ENCODE measurements at regions of chr4 and their contacts with region 1.

Region 1: GRCh38 chr4:109977854-109978501 is 65.3 kb downstream of the EGF start:
- DNase-seq: no peak
- ATAC-seq: peak; percentile 49 to 62 (median 58)
- H3K4me3 ChIP-seq: no peak overlapping the region
- H3K27ac ChIP-seq: no peak overlapping the region
- H3K4me1 ChIP-seq: no peaks in the 10 kb centered on the region
- H3K27me3 ChIP-seq: no peaks in the 10 kb centered on the region
- CTCF ChIP-seq: peak; percentile 68

Region 2: DNA sequence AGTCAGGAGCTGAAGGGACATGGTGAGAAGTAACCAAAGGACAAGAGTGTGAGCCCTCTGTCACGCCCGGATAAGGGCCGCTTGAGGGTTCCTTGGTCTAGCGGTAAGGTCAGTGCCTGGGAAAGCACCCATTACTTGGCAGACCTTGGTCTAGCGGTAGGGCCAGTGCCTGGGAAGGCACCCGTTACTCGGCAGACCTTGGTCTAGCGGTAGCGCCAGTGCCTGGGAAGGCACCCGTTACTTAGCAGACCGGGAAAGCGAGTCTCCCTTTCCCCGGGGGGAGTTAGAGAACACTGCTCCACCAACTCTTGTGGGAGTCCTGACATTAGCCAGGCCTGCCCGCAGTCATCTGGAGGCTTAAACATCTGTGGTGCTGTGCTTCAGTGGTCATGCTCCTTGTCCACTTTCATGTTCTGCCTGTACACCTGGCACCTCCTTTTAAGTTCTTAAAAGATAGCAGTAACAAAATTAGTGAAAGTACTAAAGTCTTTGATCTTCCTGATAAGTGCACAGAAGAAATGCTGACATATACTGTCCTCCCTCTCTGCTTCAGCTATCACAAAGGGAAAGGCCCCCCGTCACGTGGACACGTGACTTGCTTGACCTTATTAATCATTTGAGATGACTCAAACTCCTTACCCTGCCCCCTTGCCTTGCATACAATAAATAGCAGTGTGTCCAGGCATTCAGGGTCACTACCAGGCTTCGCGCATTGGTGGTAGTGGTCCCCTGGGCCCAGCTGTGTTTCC is 553.7 kb before region 1 on chr4:
- intact Hi-C with region 1: loop called (anchors 5 to 10 kb)
- DNase-seq: no peak
- ATAC-seq: no peak
- H3K4me3 ChIP-seq: no peak overlapping the region
- H3K27ac ChIP-seq: no peak overlapping the region
- H3K4me1 ChIP-seq: no peaks in the 10 kb centered on the region
- H3K27me3 ChIP-seq: peaks cover 0 to 2% (median 0%) of the 10 kb centered on the region in 3 donors
- CTCF ChIP-seq: no peak

Region 3: GRCh38 chr4:109532182-109532581 is 445.8 kb before region 1 on chr4:
- intact Hi-C with region 1: loop called in 1 of 2 experiments (anchors 10 kb)
- DNase-seq: no peak
- ATAC-seq: no peak
- H3K4me3 ChIP-seq: no peak overlapping the region
- H3K27ac ChIP-seq: no peak overlapping the region
- H3K4me1 ChIP-seq: no peaks in the 10 kb centered on the region
- H3K27me3 ChIP-seq: no peaks in the 10 kb centered on the region
- CTCF ChIP-seq: no peak

Region 4: DNA sequence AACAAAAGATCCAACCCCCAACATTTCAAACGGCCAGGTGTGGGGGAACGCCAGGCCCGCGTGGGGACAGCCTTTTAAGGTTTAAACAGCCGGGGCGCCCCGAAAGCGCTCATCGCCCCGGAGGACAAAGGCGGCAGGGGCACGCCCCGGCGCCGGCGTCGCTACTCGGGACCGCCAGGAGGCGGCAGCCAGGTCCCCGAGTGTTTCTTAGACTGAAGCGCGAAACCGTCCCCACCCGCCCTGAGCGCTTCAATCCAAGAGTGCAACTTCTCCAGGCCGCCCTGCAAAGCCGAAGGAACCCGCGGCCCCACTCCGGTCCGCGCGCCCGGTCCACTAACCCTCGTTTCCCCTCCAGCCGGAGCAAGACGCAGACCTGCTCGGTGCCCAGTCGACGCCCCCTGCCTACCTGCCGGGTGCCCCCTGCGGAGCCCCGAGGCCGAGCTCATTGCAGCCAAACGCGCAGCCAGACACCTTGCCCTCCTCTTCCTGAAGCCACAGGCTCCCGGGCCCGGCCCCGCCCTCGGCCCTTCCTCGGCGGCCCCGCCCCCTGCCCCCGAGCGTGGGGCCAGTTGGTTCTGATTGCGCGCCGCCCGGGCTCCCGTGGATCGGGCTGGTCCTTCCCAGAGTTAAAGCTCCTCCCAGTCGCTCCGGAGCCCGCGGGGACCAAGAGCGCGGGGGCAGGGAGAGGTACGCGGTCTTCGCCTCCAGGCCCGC is 274.9 kb before region 1 on chr4 and contains the start of gene CASP6:
- intact Hi-C with region 1: loop called (anchors 5 to 10 kb)
- DNase-seq: peak; percentile 87 to 89
- ATAC-seq: peak; percentile 87 to 96 (median 92)
- H3K4me3 ChIP-seq: peak within 1 kb of the TSS; percentile 77
- H3K27ac ChIP-seq: peak within 1 kb of the TSS; percentile 70
- H3K4me1 ChIP-seq: peaks cover 9% of the 10 kb centered on the region
- H3K27me3 ChIP-seq: no peaks in the 10 kb centered on the region
- CTCF ChIP-seq: peak; percentile 71
- total RNA-seq, gene CASP6: 2.7 to 4.6 (median 4.0) TPM

Region 5: GRCh38 chr4:109815151-109816081 is 162.6 kb before region 1 on chr4 and contains the start of gene GAR1:
- intact Hi-C with region 1: loop called (anchors 10 kb)
- DNase-seq: peak; percentile 87 to 93
- ATAC-seq: peak; percentile 99 to 100 (median 100)
- H3K4me3 ChIP-seq: peak within 1 kb of the TSS; percentile 92
- H3K27ac ChIP-seq: peak within 1 kb of the TSS; percentile 92
- H3K4me1 ChIP-seq: peaks cover 10% of the 10 kb centered on the region
- H3K27me3 ChIP-seq: no peaks in the 10 kb centered on the region
- CTCF ChIP-seq: no peak
- total RNA-seq, gene GAR1: 7.7 to 17.9 (median 11.3) TPM

Region 6: DNA sequence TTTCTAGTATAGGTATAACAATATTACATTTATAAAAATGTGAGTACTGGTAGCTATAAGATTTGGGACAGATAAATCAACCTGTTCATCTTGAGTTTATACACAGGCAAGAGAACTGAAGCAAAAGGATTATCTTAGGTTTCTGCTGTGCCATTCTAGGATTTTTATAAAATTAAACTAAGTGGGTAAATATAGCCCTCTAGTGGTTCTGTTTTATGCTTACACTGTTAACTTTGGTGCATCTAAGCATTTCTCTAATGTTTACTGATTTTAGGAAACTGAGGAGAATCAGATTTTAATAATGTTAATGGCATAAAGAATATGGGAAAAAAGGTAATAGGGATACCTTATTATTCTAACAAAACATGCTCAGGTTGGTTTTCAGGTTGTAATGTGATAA is 151.3 kb before region 1 on chr4:
- intact Hi-C with region 1: loop called in 1 of 2 experiments (anchors 10 kb)
- DNase-seq: no peak
- ATAC-seq: peak in 1 of 4 donors; percentile 56
- H3K4me3 ChIP-seq: no peak overlapping the region
- H3K27ac ChIP-seq: no peak overlapping the region
- H3K4me1 ChIP-seq: no peaks in the 10 kb centered on the region
- H3K27me3 ChIP-seq: no peaks in the 10 kb centered on the region
- CTCF ChIP-seq: peak; percentile 53

Measured in psoas muscle (tissue), 8 donors.